Mammary epithelial cell (primary cell): ENCODE measurements at regions of chr10 and their contacts with region 1.

Region 1: GRCh38 chr10:24891823-24892222 is 60.6 kb downstream of the PRTFDC1 start:
- DNase-seq: peak; percentile 91
- H3K4me3 ChIP-seq: no peak overlapping the region
- H3K27ac ChIP-seq: no peak overlapping the region
- H3K4me1 ChIP-seq: peaks cover 25% of the 10 kb centered on the region
- H3K27me3 ChIP-seq: no peaks in the 10 kb centered on the region
- CTCF ChIP-seq: no peak

Region 2: GRCh38 chr10:24680647-24681524 is 210.9 kb before region 1 on chr10:
- CTCF ChIA-PET with region 1: no interaction called
- dilution Hi-C with region 1: no loop called
- in situ Hi-C with region 1: no loop called
- intact Hi-C with region 1: no loop called
- DNase-seq: no peak
- H3K4me3 ChIP-seq: no peak overlapping the region
- H3K27ac ChIP-seq: peak overlapping the region; percentile 7
- H3K4me1 ChIP-seq: no peaks in the 10 kb centered on the region
- H3K27me3 ChIP-seq: no peaks in the 10 kb centered on the region
- CTCF ChIP-seq: no peak

Region 3: GRCh38 chr10:24858288-24859270 is 33.2 kb before region 1 on chr10:
- CTCF ChIA-PET with region 1: no interaction called
- dilution Hi-C with region 1: no loop called
- in situ Hi-C with region 1: no loop called
- intact Hi-C with region 1: no loop called
- DNase-seq: peak; percentile 66
- H3K4me3 ChIP-seq: no peak overlapping the region
- H3K27ac ChIP-seq: no peak overlapping the region
- H3K4me1 ChIP-seq: peaks cover 18% of the 10 kb centered on the region
- H3K27me3 ChIP-seq: no peaks in the 10 kb centered on the region
- CTCF ChIP-seq: no peak

Region 4: GRCh38 chr10:24873281-24873683 is 18.5 kb before region 1 on chr10:
- CTCF ChIA-PET with region 1: no interaction called
- dilution Hi-C with region 1: no loop called
- in situ Hi-C with region 1: no loop called
- intact Hi-C with region 1: loop called (anchors 2 kb)
- DNase-seq: peak; percentile 84
- H3K4me3 ChIP-seq: no peak overlapping the region
- H3K27ac ChIP-seq: no peak overlapping the region
- H3K4me1 ChIP-seq: peaks cover 18% of the 10 kb centered on the region
- H3K27me3 ChIP-seq: no peaks in the 10 kb centered on the region
- CTCF ChIP-seq: no peak